Esophagus muscularis mucosa (tissue), 4 donors: ENCODE measurements at regions of chr10 and their contacts with region 1.

Region 1: DNA sequence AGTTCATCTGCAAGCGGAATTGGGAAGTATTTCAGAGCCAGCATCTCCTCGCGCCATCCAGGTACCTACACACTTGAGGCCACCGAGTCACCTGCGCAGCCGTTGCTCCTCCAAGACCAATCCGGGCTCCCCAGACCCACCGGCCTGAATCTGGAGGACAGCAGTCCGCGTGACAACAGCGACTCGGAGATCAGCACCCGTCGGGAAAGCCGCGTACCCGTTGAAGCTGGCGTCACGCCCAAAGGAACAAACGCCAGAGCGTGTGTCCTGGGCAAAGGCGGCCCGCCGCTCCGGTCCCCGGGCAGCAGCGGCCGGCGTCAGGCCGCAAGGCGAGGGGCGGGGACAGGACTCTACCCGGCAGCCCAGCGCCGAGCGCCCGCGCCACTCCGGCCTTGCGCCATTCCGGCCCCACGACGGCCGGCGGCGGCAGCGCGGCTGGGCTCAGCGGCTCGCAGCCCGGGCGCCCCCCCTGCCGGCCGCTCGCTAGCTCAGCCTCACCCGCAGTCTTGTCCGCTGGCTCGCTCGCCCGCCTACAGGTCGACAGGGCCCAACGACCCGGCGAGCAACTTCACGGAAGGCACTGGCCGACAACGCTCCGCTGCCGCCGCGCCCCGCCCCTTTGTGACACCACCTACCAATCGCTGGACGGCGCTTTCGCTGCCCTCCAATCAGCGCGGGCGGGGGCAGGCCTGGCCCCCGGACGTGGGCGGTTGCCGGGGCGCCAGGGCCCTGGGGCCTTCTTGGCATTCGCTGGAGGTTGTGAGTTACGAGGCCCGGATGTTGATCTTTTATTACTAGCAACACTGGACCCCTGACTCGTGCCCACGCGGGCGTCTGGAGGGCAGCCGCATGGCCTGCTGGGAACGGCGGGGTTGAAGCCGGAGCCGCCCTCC is at the start of gene ZFAND4:
- DNase-seq: peak; percentile 99
- H3K4me3 ChIP-seq: peak within 1 kb of the TSS; percentile 72 to 85 (median 74)
- H3K27ac ChIP-seq: peak within 1 kb of the TSS; percentile 83 to 90 (median 86)
- H3K4me1 ChIP-seq: peaks cover 11 to 20% (median 15%) of the 10 kb centered on the region in 4 donors
- H3K27me3 ChIP-seq: no peaks in the 10 kb centered on the region
- CTCF ChIP-seq: peak; percentile 40 to 63 (median 57)
- EP300 ChIP-seq: no peak
- POLR2A ChIP-seq: no peak
- total RNA-seq, gene ZFAND4: 12.9 to 18.7 (median 16.7) TPM

Region 2: DNA sequence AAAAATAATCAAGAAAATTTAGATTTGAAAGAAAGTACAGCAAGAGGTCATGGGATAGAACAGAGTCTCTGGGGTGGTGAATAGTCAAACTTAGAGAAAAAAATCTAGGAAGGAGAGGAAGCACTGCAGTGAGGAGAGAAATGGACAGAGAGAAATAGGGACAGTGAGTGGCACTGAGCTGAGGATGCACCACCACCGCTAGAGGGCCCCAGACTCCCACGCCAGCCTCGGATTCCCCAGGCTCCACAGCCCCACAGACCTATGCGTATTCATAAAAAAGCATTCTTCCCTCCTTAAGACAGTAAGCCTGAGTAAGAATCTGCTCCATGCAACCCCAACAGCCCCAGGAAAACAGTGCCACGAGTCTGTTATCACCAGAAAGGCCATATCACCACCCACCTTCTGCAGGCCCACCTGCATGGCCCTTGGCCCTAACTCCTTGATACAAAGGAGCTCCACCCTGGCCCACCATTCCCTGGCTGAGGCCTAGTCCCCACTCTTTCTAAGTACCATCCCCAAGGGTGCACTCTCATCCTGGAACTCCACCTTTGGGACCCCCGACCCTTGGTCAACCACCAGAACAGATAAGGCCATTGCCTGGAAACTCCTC is 207.4 kb before region 1 on chr10:
- intact Hi-C with region 1: loop called (anchors 5 kb)
- DNase-seq: no peak
- H3K4me3 ChIP-seq: no peak overlapping the region
- H3K27ac ChIP-seq: no peak overlapping the region
- H3K4me1 ChIP-seq: peaks cover 2 to 14% (median 7%) of the 10 kb centered on the region in 4 donors
- H3K27me3 ChIP-seq: no peaks in the 10 kb centered on the region
- CTCF ChIP-seq: peak; percentile 66 to 89 (median 76)
- EP300 ChIP-seq: no peak
- POLR2A ChIP-seq: no peak

Region 3: GRCh38 chr10:45602082-45602730 is 70.2 kb before region 1 on chr10:
- intact Hi-C with region 1: loop called (anchors 5 kb)
- DNase-seq: no peak
- H3K4me3 ChIP-seq: no peak overlapping the region
- H3K27ac ChIP-seq: no peak overlapping the region
- H3K4me1 ChIP-seq: peaks cover 0 to 8% (median 2%) of the 10 kb centered on the region in 4 donors
- H3K27me3 ChIP-seq: peaks cover 0 to 18% (median 8%) of the 10 kb centered on the region in 4 donors
- CTCF ChIP-seq: no peak
- EP300 ChIP-seq: no peak
- POLR2A ChIP-seq: no peak